HCT116 (cell line): ENCODE measurements at regions of chr5 and their contacts with region 1.

Region 1: DNA sequence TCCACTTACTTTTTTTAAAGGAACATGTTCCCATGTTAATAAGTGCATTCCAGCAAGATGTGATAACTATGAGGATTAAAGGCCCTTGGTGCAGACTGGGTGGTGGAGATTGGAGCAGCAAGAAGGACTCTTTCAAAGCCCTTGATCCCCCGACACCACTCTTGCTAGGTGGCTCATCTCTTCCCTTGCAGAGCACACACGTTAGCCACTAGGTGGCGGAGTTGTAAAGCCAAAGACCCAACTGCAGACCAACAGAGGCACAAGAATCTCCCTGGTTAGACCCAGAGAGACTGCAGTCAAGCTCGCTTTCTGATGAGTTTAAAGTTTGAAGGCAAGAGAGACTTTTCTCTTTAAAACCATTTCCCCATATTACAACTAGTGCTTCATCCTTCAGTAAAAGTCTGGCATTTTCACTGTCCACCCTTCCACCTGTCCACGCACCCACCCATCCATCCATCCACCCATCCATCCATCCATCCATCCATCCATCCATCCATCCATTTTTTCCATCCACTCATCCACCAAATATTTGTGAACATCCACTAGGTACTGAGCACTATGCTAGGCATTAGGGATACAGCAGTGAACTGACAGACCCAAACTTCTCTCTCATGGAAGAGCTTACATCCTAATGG is 226.9 kb downstream of the MSX2 start:
- DNase-seq: peak; percentile 71
- ATAC-seq: peak; percentile 98
- H3K4me3 ChIP-seq: no peak overlapping the region
- H3K27ac ChIP-seq: no peak overlapping the region
- H3K4me1 ChIP-seq: no peaks in the 10 kb centered on the region
- H3K27me3 ChIP-seq: no peaks in the 10 kb centered on the region
- CTCF ChIP-seq: peak; percentile 88 to 91 (median 88)
- POLR2A ChIP-seq: no peak
- RAD21 ChIP-seq: peak; percentile 98

Region 2: DNA sequence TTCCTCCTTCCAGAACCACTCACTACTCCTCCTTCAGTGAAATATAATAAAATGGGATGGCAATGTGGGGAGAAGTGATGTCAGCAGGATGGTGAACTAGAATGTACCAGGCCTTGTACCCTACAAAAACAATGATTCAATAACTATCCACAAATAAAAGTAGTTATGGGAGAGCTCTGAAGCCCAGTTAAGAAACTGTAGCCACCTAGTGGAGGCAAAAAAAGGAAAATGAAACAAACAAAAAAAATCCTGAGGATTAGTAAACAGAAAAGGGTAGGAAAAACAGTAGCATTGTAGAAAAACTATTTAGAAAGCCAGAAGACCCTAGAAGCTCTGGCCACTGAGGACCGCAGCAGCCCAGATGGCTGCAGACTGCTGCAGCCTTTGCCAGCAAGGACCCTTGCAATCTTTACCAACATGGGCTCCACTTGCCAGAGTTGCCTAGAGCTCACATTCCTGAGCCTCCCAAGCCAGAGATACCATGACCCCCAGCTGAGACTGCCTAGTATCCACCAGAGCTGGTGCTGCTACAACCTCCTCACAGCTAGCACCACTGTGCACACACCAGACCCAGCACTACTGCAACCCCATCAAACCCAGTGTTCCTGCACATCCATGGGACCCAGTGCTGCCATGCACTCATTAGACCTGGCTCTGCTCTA is 486.6 kb before region 1 on chr5:
- CTCF ChIA-PET with region 1: no interaction called
- POLR2A ChIA-PET with region 1: no interaction called
- RAD21 ChIA-PET with region 1: no interaction called
- intact Hi-C with region 1: no loop called
- DNase-seq: no peak
- ATAC-seq: peak; percentile 54
- H3K4me3 ChIP-seq: no peak overlapping the region
- H3K27ac ChIP-seq: no peak overlapping the region
- H3K4me1 ChIP-seq: peaks cover 0 to 12% of the 10 kb centered on the region in 2 experiments; a peak in 1 of 4 replicates
- H3K27me3 ChIP-seq: no peaks in the 10 kb centered on the region
- CTCF ChIP-seq: peak; percentile 14 to 49 (median 36); a peak in 4 of 6 replicates
- POLR2A ChIP-seq: no peak
- RAD21 ChIP-seq: peak; percentile 29

Region 3: GRCh38 chr5:175460132-175460531 is 508.9 kb after region 1 on chr5:
- CTCF ChIA-PET with region 1: interaction called, 6 read pairs
- POLR2A ChIA-PET with region 1: no interaction called
- RAD21 ChIA-PET with region 1: interaction called in 1 of 2 experiments, 3 read pairs
- intact Hi-C with region 1: loop called (anchors 1 kb)
- DNase-seq: no peak
- ATAC-seq: peak; percentile 55
- H3K4me3 ChIP-seq: no peak overlapping the region
- H3K27ac ChIP-seq: no peak overlapping the region
- H3K4me1 ChIP-seq: peaks cover 7% of the 10 kb centered on the region in 2 experiments; a peak in 2 of 4 replicates
- H3K27me3 ChIP-seq: no peaks in the 10 kb centered on the region
- CTCF ChIP-seq: peak; percentile 30 to 61 (median 53); a peak in 4 of 6 replicates
- POLR2A ChIP-seq: no peak
- RAD21 ChIP-seq: peak; percentile 63